Left ventricle myocardium inferior (tissue), 1 donor: ENCODE measurements at regions of chr14 and their contacts with region 1.

Region 1: DNA sequence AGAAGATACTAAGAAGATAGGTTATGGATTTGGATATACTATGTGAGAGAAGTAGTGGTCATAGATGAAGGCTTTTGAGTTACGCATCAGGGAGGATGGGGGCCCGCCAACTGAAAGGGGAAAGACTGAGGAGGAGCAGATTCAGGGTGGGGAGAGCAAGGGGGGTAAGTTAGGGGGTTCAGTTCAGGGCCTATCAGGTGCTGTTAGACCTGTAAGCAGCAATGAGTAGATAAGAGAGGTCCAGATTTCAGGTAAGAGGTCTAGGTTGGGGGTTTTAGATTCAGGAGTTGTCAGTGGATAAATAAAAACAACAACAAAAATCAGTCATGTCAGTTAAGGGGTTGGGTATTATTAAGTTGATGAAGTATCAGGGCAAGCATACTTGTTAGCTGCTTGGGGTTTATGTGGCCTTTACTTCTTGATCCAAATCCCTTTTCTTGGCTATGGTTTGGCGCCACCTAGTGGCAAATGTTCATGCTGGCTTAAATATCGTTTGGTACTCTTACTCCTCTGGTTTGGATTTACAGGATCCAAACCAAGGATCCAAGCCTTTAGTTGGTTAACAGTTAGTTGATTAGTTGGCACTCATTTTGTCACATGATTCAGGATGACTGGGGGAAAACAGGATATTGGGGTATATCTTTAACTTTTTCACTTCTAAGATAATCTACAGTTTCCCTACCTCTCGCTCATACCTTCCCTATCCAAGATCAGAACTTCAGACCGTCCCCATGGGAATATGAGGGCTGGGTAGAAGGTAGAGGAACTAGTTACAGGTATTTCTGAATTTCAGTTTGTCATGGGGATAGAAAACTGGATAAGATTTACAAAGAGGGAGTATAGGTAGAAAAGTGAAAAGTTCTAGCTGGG is 65.1 kb downstream of the PCNX1 start:
- DNase-seq: peak; percentile 74
- H3K4me3 ChIP-seq: no peak overlapping the region
- H3K27ac ChIP-seq: no peak overlapping the region
- H3K4me1 ChIP-seq: peaks cover 14% of the 10 kb centered on the region
- H3K27me3 ChIP-seq: no peaks in the 10 kb centered on the region
- CTCF ChIP-seq: peak; percentile 95

Region 2: GRCh38 chr14:70816525-70816924 is 155.8 kb before region 1 on chr14:
- intact Hi-C with region 1: loop called (anchors 5 kb)
- DNase-seq: no peak
- H3K4me3 ChIP-seq: no peak overlapping the region
- H3K27ac ChIP-seq: no peak overlapping the region
- H3K4me1 ChIP-seq: peaks cover 10% of the 10 kb centered on the region
- H3K27me3 ChIP-seq: peaks cover 18% of the 10 kb centered on the region
- CTCF ChIP-seq: no peak

Region 3: DNA sequence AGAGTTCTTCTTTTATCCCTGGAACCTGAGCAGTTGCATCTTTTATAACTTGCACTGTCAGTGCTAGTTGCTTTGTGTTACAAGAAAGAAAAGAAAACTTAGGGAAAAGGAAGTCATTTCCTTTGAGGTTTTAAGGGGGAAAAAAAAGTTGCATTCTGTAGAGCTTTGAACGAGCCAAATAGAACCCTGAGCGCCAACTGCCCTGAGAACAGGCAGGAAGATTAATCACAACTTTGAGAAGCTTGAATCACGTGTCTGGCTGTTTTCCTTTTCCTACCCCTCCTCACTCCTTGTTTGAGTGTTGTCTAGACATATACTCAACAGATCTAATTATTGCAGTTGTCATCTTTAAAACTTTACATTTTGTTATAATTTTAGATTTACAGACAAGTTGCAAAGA is 52.6 kb before region 1 on chr14:
- intact Hi-C with region 1: loop called (anchors 10 kb)
- DNase-seq: no peak
- H3K4me3 ChIP-seq: no peak overlapping the region
- H3K27ac ChIP-seq: peak overlapping the region; percentile 6
- H3K4me1 ChIP-seq: peaks cover 72% of the 10 kb centered on the region
- H3K27me3 ChIP-seq: no peaks in the 10 kb centered on the region
- CTCF ChIP-seq: no peak

Region 4: GRCh38 chr14:71021347-71022014 is 49.1 kb after region 1 on chr14:
- intact Hi-C with region 1: no loop called
- DNase-seq: no peak
- H3K4me3 ChIP-seq: no peak overlapping the region
- H3K27ac ChIP-seq: no peak overlapping the region
- H3K4me1 ChIP-seq: no peaks in the 10 kb centered on the region
- H3K27me3 ChIP-seq: no peaks in the 10 kb centered on the region
- CTCF ChIP-seq: no peak

Region 5: GRCh38 chr14:71070169-71070568 is 97.8 kb after region 1 on chr14:
- intact Hi-C with region 1: no loop called
- DNase-seq: no peak
- H3K4me3 ChIP-seq: no peak overlapping the region
- H3K27ac ChIP-seq: no peak overlapping the region
- H3K4me1 ChIP-seq: no peaks in the 10 kb centered on the region
- H3K27me3 ChIP-seq: no peaks in the 10 kb centered on the region
- CTCF ChIP-seq: no peak